ENCODE measurements at regions of chr9 and their contacts with region 1.

Region 1: GRCh38 chr9:127199001-127199791 is 65.4 kb upstream of the GARNL3 start:
- DNase-seq: peak; percentile 82 to 87 (median 84)
- H3K4me3 ChIP-seq: no peak overlapping the region
- H3K27ac ChIP-seq: peak overlapping the region in 1 of 2 donors; percentile 3
- H3K4me1 ChIP-seq: peaks cover 0 to 19% (median 7%) of the 10 kb centered on the region in 3 donors
- H3K27me3 ChIP-seq: no peaks in the 10 kb centered on the region
- CTCF ChIP-seq: peak; percentile 92

Region 2: GRCh38 chr9:126939821-126940221 is 259.4 kb before region 1 on chr9:
- intact Hi-C with region 1: loop called (anchors 2 kb)
- DNase-seq: peak in 4 of 5 donors; percentile 31 to 73 (median 59)
- H3K4me3 ChIP-seq: no peak overlapping the region
- H3K27ac ChIP-seq: peak overlapping the region; percentile 44 to 68
- H3K4me1 ChIP-seq: peaks cover 0 to 5% (median 0%) of the 10 kb centered on the region in 3 donors
- H3K27me3 ChIP-seq: no peaks in the 10 kb centered on the region
- CTCF ChIP-seq: no peak

Region 3: DNA sequence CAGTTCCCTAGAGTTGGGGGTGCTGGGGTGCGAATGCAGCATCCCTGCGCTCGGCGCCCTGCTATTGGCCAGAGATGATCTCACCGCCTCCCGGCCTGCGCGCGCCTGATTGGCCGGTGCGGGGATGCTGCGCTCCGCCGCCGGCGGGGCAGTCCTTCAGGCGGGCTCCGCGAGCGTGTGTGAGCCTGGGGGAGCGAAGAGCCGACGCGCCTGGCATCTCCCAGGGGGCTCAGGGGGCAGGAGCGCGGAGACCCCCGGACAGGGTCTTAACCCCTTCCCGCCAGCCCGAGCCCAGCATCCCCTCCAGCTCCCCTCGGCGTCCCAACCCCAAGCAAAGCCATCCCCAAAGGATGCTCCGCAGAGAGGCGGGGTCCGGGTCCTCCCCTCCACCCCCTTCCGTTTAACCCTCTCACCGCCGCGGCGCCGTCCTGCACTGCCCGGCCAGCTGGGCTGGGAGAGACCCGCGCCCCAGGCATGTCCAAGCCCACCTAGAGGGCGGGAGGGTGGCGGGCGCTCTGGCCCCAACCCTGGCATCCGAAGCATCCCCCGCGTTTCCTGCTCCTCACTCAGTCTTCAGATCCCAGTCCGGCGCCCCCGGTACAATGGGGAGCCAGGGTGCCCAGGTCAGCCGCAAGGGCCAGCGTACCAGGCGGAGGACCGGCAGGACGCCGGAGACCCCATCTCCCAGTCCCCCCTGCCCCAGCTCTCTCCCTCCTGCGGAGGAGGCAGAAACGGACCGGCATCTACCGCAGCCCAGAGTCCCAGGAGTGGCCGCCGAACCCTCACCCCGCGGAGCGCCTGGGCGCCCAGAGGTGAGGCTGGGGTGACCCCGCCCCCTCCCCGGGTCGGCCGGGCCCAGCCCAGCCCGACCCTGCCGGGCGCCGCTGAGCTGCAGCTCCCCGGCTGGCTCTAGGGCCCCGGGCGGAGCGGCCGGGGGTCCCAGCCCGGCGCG is 555.2 kb after region 1 on chr9:
- intact Hi-C with region 1: no loop called
- DNase-seq: peak in 4 of 5 donors; percentile 48 to 65 (median 56)
- H3K4me3 ChIP-seq: no peak overlapping the region
- H3K27ac ChIP-seq: no peak overlapping the region
- H3K4me1 ChIP-seq: no peaks in the 10 kb centered on the region
- H3K27me3 ChIP-seq: peaks cover 10% of the 10 kb centered on the region
- CTCF ChIP-seq: no peak